HepG2 (cell line): ENCODE measurements at regions of chr2 and their contacts with region 1.

Region 1: GRCh38 chr2:210171309-210172203 is at the start of gene KANSL1L:
- DNase-seq: peak; percentile 90
- ATAC-seq: peak; percentile 90
- H3K4me3 ChIP-seq: peak within 1 kb of the TSS; percentile 94 to 99 (median 97)
- H3K27ac ChIP-seq: peak within 1 kb of the TSS; percentile 97
- H3K4me1 ChIP-seq: peaks cover 25% of the 10 kb centered on the region
- H3K27me3 ChIP-seq: no peaks in the 10 kb centered on the region; a peak in 2 of 5 replicates
- CTCF ChIP-seq: 0 out of 2 replicates have a peak, but pooled peaks have one; percentile 2
- EP300 ChIP-seq: peak in 1 of 2 experiments; percentile 30; a peak in 1 of 4 replicates
- POLR2A ChIP-seq: peak; percentile 66 to 83
- RAD21 ChIP-seq: no peak
- total RNA-seq, gene KANSL1L: 9.8 and 10.3 TPM in 2 replicates

Region 2: DNA sequence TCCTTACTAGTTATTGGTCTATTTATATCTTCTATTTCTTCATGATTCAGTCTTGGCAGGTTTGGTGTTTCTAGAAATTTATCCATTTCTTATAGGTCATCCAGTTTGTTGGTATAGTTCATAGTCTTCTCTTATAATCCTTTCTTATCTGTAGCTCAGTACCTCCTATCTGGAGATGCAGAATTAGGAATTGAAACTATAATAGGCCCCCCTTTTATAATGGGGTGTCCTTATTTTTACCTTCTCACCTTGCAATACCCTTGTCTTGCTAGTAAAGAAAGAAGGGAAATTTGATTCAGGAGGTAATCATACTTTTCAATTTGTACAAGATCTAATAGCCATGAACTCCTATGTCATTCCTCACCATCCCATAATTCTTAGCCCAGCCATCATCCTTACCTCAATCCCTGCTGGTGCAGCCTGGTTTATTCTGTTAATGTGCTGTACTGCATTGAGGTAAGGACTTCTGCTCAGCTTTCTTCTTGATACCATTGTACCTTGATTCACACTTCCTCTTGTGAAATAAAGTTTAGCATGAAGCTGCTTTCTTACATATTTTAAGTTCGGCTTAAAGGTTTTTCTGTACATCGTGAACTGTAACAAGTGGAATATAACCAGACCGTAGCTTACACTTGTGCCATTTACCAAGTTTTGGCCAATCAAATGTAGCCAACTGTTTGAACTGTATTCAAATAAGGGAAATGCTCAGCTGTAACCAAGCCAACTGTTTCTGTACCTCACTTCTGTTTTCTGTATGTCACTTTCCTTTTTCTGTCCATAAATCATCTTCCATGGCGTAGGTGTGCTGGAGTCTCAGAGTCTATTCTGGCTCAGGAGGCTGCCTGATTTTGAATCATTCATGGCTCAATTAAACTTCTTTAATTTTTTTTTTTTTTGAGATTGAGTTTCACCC is 1805.1 kb before region 1 on chr2:
- CTCF ChIA-PET with region 1: no interaction called
- POLR2A ChIA-PET with region 1: no interaction called
- in situ Hi-C with region 1: no loop called
- intact Hi-C with region 1: loop called (anchors 5 kb)
- DNase-seq: no peak
- ATAC-seq: no peak
- H3K4me3 ChIP-seq: no peak overlapping the region
- H3K27ac ChIP-seq: no peak overlapping the region
- H3K4me1 ChIP-seq: peaks cover 27% of the 10 kb centered on the region
- H3K27me3 ChIP-seq: no peaks in the 10 kb centered on the region
- CTCF ChIP-seq: no peak
- EP300 ChIP-seq: no peak
- POLR2A ChIP-seq: no peak
- RAD21 ChIP-seq: no peak

Region 3: DNA sequence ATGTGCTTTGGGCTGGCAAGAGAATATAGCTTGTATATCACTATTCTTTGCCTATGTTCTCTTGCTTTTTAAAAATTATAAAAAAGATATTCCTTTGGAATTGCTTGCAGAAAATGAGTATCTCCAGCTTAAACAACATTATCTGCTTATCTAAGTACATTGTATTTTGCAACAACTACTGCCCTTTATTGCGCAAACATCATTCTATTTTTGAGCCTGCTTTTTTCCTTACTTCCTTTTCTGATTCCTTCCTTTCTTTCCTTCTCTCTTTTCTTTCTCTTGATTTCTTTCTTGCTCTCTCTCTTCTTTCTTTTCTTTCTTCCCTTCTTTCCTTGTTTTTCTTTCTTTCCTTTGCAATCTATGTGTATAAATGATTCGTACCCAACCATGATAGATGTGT is 325.9 kb before region 1 on chr2:
- CTCF ChIA-PET with region 1: no interaction called
- POLR2A ChIA-PET with region 1: no interaction called
- in situ Hi-C with region 1: no loop called
- intact Hi-C with region 1: no loop called
- DNase-seq: no peak
- ATAC-seq: no peak
- H3K4me3 ChIP-seq: no peak overlapping the region
- H3K27ac ChIP-seq: no peak overlapping the region
- H3K4me1 ChIP-seq: no peaks in the 10 kb centered on the region
- H3K27me3 ChIP-seq: no peaks in the 10 kb centered on the region
- CTCF ChIP-seq: no peak
- EP300 ChIP-seq: no peak
- POLR2A ChIP-seq: no peak
- RAD21 ChIP-seq: no peak

Region 4: DNA sequence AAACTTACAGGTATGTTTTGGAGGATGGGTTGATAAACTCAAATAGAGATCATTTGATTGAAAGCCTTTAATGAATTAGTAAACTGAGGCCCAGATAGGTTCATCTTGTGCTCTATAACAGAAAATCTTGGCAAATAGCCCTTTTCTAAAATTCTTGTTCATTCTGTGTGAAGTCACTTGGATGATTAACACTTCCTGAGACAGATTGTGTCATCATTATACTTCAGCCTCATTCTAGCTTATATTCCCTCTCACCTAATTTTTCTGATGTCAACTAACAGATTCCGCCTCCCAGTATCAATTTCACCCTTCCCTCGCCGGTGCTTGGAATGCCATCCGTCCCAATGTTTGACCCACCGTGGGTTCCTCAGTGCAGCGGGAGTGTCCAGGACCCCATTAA is 253.3 kb before region 1 on chr2:
- CTCF ChIA-PET with region 1: no interaction called
- POLR2A ChIA-PET with region 1: no interaction called
- in situ Hi-C with region 1: no loop called
- intact Hi-C with region 1: no loop called
- DNase-seq: no peak
- ATAC-seq: no peak
- H3K4me3 ChIP-seq: no peak overlapping the region
- H3K27ac ChIP-seq: no peak overlapping the region
- H3K4me1 ChIP-seq: no peaks in the 10 kb centered on the region
- H3K27me3 ChIP-seq: no peaks in the 10 kb centered on the region; a peak in 1 of 5 replicates
- CTCF ChIP-seq: no peak
- EP300 ChIP-seq: no peak
- POLR2A ChIP-seq: no peak
- RAD21 ChIP-seq: no peak

Region 5: GRCh38 chr2:209990838-209991237 is 180.7 kb before region 1 on chr2:
- CTCF ChIA-PET with region 1: no interaction called
- POLR2A ChIA-PET with region 1: no interaction called
- in situ Hi-C with region 1: no loop called
- intact Hi-C with region 1: no loop called
- DNase-seq: no peak
- ATAC-seq: no peak
- H3K4me3 ChIP-seq: no peak overlapping the region
- H3K27ac ChIP-seq: no peak overlapping the region
- H3K4me1 ChIP-seq: no peaks in the 10 kb centered on the region
- H3K27me3 ChIP-seq: peaks cover 1 to 5% of the 10 kb centered on the region in 2 experiments; a peak in 2 of 5 replicates
- CTCF ChIP-seq: no peak
- EP300 ChIP-seq: no peak
- POLR2A ChIP-seq: no peak
- RAD21 ChIP-seq: no peak

Region 6: DNA sequence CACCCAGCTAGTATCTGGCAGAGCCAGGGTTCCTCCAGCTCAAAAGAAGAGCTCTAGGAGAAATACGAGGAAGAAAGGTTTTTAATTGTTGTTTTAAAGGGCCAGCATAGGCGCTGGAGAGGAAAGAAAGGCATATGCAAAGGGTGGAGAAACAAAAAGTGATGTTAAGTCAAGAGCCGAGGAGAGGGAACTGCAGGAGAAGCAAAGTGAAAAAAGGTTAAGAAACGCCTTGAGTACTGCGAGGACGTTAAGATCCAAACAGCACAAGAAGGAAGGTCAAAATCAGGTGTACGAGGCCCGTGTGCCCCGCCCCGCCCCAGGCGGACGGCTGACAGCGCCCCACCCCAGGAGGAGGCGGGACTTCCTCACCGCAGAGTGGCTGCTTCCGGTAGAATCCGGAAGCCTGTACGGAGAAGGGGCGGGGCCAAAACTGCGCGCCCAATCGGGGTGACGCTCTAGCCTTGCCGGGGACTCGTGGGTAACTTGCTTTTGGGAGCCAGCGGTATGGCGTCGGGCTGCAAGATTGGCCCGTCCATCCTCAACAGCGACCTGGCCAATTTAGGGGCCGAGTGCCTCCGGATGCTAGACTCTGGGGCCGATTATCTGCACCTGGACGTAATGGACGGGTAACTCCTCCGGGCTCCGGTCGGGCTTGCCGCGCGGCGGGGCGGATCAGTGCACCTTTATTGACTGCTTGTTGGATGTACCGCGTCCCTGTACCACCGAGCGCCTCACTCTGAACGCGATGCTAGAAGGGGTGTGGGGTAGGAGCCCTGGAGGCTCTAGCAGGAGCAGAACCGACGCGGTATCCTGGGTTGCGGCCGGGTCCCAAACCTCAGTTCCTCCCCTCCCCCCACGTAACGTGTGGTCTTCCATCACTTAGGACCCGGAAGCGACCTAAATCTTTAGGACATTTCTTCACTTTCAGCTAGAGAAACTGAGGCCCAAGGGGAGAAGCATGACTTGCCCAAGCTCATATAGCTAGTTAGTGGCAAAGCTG is 169.1 kb before region 1 on chr2 and contains the start of gene RPE:
- CTCF ChIA-PET with region 1: no interaction called
- POLR2A ChIA-PET with region 1: interaction called, 4 read pairs
- in situ Hi-C with region 1: no loop called
- intact Hi-C with region 1: loop called (anchors 1 kb)
- DNase-seq: peak; percentile 92
- ATAC-seq: peak; percentile 99
- H3K4me3 ChIP-seq: peak within 1 kb of the TSS; percentile 90 to 97 (median 94)
- H3K27ac ChIP-seq: peak within 1 kb of the TSS; percentile 49
- H3K4me1 ChIP-seq: peaks cover 51% of the 10 kb centered on the region
- H3K27me3 ChIP-seq: no peaks in the 10 kb centered on the region; a peak in 1 of 5 replicates
- CTCF ChIP-seq: peak; percentile 17; the same call in 1 of the 2 replicates
- EP300 ChIP-seq: no peak
- POLR2A ChIP-seq: peak; percentile 77 to 92
- RAD21 ChIP-seq: peak; percentile 39; the same call in 1 of the 2 replicates
- total RNA-seq, gene RPE: 107 and 166 TPM in 2 replicates

Region 7: GRCh38 chr2:210112871-210113270 is 58.7 kb before region 1 on chr2:
- CTCF ChIA-PET with region 1: no interaction called
- POLR2A ChIA-PET with region 1: no interaction called
- in situ Hi-C with region 1: no loop called
- intact Hi-C with region 1: loop called (anchors 5 kb)
- DNase-seq: peak; percentile 53
- ATAC-seq: peak; percentile 88
- H3K4me3 ChIP-seq: no peak overlapping the region
- H3K27ac ChIP-seq: no peak overlapping the region
- H3K4me1 ChIP-seq: peaks cover 11% of the 10 kb centered on the region
- H3K27me3 ChIP-seq: no peaks in the 10 kb centered on the region
- CTCF ChIP-seq: no peak
- EP300 ChIP-seq: no peak
- POLR2A ChIP-seq: no peak
- RAD21 ChIP-seq: no peak